Testis (tissue), 5 donors: ENCODE measurements at regions of chr17 and their contacts with region 1.

Region 1: DNA sequence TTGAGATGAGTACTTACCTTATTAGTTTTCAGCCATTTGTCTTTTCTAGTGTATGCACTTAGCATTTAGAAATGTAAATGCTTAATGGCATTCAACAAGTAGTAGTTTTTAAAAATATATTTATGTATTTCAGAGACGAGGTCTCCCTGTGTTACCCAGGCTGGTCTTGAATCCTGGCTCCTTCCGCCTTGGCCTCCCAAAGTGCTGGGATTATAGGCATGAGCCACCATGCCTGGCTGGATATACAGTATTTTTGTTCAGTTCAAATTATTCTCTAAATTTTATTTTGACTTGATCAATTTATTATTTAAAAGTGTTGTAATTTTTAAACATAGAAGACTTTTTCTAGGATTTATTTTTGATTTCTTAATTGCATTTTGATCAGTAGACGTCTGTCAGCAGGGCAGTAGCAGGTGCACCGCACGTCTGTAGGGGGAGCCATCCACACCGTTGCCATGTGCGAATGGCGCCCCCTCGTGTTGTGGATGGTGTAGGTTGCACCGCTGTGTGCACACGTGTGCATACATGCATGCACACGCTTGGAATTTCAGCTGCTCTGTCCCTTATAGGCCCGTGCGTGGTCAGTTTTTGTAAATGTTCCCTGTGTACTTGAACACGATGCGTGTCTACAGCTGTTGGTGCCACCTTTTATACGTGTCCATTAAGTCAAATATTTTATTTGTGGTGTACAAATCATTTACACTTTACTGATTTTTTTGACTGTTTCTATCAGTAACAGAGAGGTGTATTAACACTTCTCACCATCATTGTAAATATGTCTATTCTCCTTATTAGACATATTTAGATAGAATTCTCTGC is 30.6 kb downstream of the RPTOR start:
- DNase-seq: peak; percentile 92
- H3K4me3 ChIP-seq: no peak overlapping the region
- H3K27ac ChIP-seq: no peak overlapping the region
- H3K4me1 ChIP-seq: no peaks in the 10 kb centered on the region
- H3K27me3 ChIP-seq: no peaks in the 10 kb centered on the region
- CTCF ChIP-seq: peak; percentile 89 to 98 (median 94)
- POLR2A ChIP-seq: no peak

Region 2: GRCh38 chr17:80477647-80478478 is 97.4 kb before region 1 on chr17:
- intact Hi-C with region 1: loop called (anchors 10 kb)
- DNase-seq: peak; percentile 66
- H3K4me3 ChIP-seq: peak overlapping the region in 1 of 2 donors; percentile 56
- H3K27ac ChIP-seq: no peak overlapping the region
- H3K4me1 ChIP-seq: peaks cover 39% of the 10 kb centered on the region
- H3K27me3 ChIP-seq: no peaks in the 10 kb centered on the region
- CTCF ChIP-seq: peak; percentile 34 to 50 (median 42)
- POLR2A ChIP-seq: no peak